Mammary epithelial cell (primary cell): ENCODE measurements at regions of chr3 and their contacts with region 1.

Region 1: DNA sequence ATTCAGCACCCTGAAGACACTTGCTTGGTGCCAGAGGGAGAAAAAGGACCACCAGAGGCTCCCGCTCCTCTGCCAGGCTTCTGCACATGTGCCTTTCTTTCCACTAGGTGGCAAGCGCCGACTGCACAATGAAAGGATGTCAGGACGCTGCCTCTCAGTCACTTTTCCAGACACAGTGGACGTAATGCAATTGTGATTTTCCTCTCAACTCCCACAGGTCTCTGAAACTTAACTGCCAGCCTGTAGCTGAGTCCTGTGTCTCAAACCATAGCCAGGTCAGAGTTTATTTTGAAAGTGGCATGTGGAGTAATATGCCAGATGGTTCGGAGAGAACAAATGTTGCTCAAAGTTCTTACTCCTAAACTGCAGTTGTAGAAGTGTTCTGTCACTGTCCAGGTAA is 162.9 kb downstream of the ITPR1 start:
- DNase-seq: peak; percentile 40
- H3K4me3 ChIP-seq: no peak overlapping the region
- H3K27ac ChIP-seq: no peak overlapping the region
- H3K4me1 ChIP-seq: peaks cover under 1% of the 10 kb centered on the region
- H3K27me3 ChIP-seq: no peaks in the 10 kb centered on the region
- CTCF ChIP-seq: peak; percentile 93 to 95

Region 2: GRCh38 chr3:5122030-5122740 is 466.1 kb after region 1 on chr3 and contains the start of gene ARL8B:
- CTCF ChIA-PET with region 1: no interaction called
- dilution Hi-C with region 1: no loop called
- in situ Hi-C with region 1: no loop called
- intact Hi-C with region 1: loop called (anchors 5 kb)
- DNase-seq: peak; percentile 85
- H3K4me3 ChIP-seq: peak within 1 kb of the TSS; percentile 76 to 93 (median 93)
- H3K27ac ChIP-seq: peak within 1 kb of the TSS; percentile 89
- H3K4me1 ChIP-seq: peaks cover 23% of the 10 kb centered on the region
- H3K27me3 ChIP-seq: no peaks in the 10 kb centered on the region
- CTCF ChIP-seq: peak; percentile 94 to 95
- total RNA-seq, gene ARL8B: 60.7 to 77.8 TPM

Region 3: DNA sequence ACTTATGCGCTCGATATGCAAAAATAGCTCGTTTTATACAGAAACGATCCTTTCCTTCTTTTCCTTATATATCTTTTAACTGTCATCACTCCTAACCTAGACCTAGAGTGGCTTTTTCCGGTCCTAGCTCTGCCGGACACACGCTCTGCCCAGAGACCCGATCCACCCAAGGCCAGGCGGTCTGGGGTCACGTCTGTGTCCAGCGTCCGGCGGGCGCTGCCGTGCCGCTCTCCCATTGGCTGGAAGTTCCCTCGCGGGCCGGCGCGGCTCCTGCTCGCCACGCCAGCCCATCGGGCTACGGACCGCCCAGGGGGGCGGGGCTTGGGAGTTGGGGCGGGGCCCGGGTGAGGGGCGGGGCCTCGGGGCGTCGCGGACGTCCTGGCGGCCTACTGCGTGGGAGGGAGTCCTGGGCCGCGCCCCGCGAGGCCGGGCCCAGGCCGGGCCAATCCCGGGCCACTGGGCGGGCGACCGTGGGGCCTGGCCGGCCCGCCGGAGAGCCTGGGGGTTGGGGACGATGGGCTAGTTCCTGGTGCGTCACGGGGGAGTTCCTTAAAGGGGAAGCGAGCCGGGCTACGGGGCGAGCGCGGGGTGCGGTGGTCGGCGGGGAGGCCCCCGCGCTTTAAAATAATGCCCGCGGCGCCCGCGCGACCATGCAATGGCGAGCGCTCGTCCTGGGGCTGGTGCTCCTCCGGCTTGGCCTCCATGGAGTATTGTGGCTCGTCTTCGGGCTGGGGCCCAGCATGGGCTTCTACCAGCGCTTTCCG is 531.3 kb after region 1 on chr3 and contains the start of gene EDEM1:
- CTCF ChIA-PET with region 1: no interaction called
- dilution Hi-C with region 1: no loop called
- in situ Hi-C with region 1: no loop called
- intact Hi-C with region 1: loop called (anchors 5 kb)
- DNase-seq: peak; percentile 95
- H3K4me3 ChIP-seq: peak within 1 kb of the TSS; percentile 61 to 89 (median 86)
- H3K27ac ChIP-seq: peak within 1 kb of the TSS; percentile 94
- H3K4me1 ChIP-seq: peaks cover 11% of the 10 kb centered on the region
- H3K27me3 ChIP-seq: no peaks in the 10 kb centered on the region
- CTCF ChIP-seq: no peak
- total RNA-seq, gene EDEM1: 78.0 to 98.0 TPM

Region 4: GRCh38 chr3:5426094-5426883 is 770.2 kb after region 1 on chr3:
- CTCF ChIA-PET with region 1: no interaction called
- dilution Hi-C with region 1: no loop called
- in situ Hi-C with region 1: no loop called
- intact Hi-C with region 1: loop called (anchors 5 kb)
- DNase-seq: peak; percentile 53
- H3K4me3 ChIP-seq: no peak overlapping the region
- H3K27ac ChIP-seq: no peak overlapping the region
- H3K4me1 ChIP-seq: no peaks in the 10 kb centered on the region
- H3K27me3 ChIP-seq: no peaks in the 10 kb centered on the region
- CTCF ChIP-seq: peak; percentile 90 to 92